ENCODE measurements at regions of chr22 and their contacts with region 1.

Region 1: DNA sequence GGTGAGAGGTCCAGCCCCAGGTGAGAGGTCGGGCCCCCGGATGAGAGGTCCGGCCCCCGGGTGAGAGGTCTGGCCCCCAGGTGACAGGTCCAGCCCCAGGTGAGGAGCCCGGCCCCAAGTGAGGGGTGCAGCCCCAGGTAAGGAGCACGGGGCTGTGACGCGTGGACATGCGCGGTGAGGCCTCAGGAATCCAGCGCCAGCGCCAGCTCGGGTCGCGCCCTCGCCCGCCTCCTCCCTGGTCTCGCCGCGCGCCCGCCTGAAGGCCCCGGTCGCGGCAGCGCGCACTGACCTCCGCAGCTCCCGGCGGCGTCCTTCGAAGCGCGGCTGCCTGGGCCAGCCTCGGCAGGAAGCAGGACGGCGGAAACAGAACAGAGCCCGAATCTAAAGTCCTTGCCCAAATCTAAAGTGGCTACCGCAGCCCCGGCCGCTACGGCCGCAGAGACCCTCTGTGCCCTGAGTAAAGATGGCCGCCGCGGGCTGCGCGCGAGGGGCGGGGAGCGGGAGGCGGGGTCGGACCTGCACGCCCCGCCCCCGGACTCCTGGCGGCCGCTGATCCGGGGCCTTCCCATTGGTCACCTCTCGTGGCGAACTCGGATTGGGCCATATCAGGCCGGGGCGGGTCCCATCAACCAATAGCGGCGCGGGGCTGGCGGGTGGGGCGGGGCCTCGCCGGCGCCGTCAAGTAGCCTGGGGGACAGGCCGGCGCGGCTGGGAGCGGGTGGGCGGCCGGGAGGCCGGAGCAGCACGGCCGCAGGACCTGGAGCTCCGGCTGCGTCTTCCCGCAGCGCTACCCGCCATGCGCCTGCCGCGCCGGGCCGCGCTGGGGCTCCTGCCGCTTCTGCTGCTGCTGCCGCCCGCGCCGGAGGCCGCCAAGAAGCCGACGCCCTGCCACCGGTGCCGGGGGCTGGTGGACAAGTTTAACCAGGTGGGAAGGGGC is at the starts of genes ALG12 and CRELD2:
- DNase-seq: peak; percentile 99
- H3K4me3 ChIP-seq: peak within 1 kb of the TSS; percentile 40 to 67 (median 43)
- H3K27ac ChIP-seq: peak within 1 kb of the TSS; percentile 90 to 96 (median 93)
- H3K4me1 ChIP-seq: peaks cover 16 to 20% of the 10 kb centered on the region in 2 donors
- H3K27me3 ChIP-seq: no peaks in the 10 kb centered on the region
- CTCF ChIP-seq: no peak
- POLR2A ChIP-seq: peak; percentile 57 to 92
- total RNA-seq, gene ALG12: 25.5 to 60.5 (median 52.2) TPM
- total RNA-seq, gene CRELD2: 50.3 to 244 (median 154) TPM

Region 2: GRCh38 chr22:49586244-49586748 is 331.9 kb before region 1 on chr22:
- intact Hi-C with region 1: no loop called
- DNase-seq: no peak
- H3K4me3 ChIP-seq: no peak overlapping the region
- H3K27ac ChIP-seq: no peak overlapping the region
- H3K4me1 ChIP-seq: no peaks in the 10 kb centered on the region
- H3K27me3 ChIP-seq: no peaks in the 10 kb centered on the region
- CTCF ChIP-seq: no peak
- POLR2A ChIP-seq: no peak

Region 3: DNA sequence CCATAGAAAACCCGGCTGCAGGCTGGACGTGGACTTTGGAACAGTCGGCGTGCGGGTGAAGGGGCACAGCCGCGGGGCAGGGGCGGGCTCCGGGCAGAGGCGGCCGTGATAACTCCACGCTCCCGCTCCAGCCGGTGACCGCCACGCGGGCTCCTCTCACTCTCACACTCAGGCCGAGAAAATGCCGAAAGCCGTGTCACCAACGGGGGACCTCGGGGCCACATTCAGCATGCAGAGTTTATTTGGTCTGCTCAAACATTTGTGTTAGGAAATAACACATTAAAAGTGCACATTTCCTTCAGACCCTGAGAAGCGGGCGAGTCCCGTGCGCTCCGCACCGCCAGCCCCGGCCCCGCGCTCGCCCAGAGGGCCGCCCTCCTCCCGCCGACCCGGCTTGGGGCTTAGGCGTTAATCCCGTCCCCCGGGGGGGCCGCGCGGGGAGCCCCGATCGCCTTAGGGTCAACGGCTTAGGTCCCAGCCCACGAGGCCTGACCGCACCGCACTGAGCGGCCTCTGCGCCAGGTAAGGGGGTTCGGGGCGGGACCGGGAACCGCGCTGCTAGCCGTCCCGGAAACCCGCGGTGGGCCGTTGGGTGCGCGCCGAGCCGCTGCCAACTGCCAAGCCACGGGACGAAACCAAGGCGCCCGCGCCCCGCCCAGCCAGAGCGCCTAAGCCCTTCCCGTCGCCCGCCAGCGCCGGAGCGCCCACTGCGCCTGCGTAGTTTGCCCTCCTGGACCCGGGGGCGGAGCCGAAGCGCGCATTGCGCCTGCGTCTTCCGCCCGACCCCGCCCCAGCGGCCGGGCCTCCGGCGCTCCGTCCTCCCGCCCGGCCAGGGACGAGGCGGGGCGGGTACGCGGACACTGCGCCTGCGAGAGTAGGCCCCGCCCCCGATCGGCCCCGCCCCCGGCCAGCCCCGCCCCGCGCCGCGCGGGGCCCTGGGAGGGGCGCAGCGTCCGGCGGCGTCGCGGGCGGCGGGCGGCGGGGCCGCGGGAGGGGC is 65.0 kb before region 1 on chr22 and contains the start of gene ZBED4:
- intact Hi-C with region 1: loop called (anchors 10 kb)
- DNase-seq: peak; percentile 97 to 98
- H3K4me3 ChIP-seq: peak within 1 kb of the TSS; percentile 65 to 91 (median 72)
- H3K27ac ChIP-seq: peak within 1 kb of the TSS; percentile 63 to 95 (median 91)
- H3K4me1 ChIP-seq: peaks cover 38% of the 10 kb centered on the region in 2 donors
- H3K27me3 ChIP-seq: peaks cover 18% of the 10 kb centered on the region
- CTCF ChIP-seq: no peak
- POLR2A ChIP-seq: peak in 1 of 2 donors; percentile 87
- total RNA-seq, gene ZBED4: 9.4 to 15.8 (median 10.1) TPM